ENCODE measurements at regions of chr5 and their contacts with region 1.

Region 1: DNA sequence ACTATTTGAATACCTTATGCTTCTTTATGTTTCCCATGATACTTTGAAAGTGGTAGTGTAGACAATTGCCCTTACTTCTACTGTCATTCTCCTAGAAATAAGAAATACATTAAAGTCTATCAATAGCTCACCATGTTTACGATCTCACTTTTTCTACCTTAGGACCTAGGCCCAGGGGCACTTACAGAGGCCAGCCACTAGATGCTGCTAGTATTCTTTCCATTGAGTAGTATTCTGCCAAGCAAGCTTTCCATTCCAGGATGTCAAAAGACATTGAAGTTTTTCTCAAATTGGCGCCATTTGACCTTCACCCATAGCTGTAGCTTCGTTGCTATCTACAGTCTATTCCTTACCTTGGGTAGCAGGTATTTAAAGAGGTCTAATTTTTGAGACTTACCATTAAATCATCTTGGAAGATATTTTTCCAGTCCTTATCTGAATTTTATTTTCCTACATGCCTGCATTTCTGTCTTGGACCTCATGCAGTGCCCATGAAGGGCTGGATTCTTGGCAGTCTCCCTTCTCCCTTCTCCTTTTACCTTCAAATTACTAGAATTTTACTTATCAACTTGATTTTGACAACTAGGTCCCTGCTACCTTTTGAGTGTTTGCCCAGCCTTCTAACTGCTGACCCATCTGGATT is 246.0 kb upstream of the NUDT12 start:
- DNase-seq: peak; percentile 40
- H3K4me3 ChIP-seq: no peak overlapping the region
- H3K27ac ChIP-seq: no peak overlapping the region
- H3K4me1 ChIP-seq: no peaks in the 10 kb centered on the region
- H3K27me3 ChIP-seq: no peaks in the 10 kb centered on the region
- CTCF ChIP-seq: peak; percentile 99 to 100

Region 2: GRCh38 chr5:103582364-103582763 is 226.2 kb before region 1 on chr5:
- CTCF ChIA-PET with region 1: interaction called, 7 read pairs
- dilution Hi-C with region 1: no loop called
- in situ Hi-C with region 1: no loop called
- intact Hi-C with region 1: loop called (anchors 5 kb)
- DNase-seq: peak; percentile 32
- H3K4me3 ChIP-seq: no peak overlapping the region
- H3K27ac ChIP-seq: no peak overlapping the region
- H3K4me1 ChIP-seq: no peaks in the 10 kb centered on the region
- H3K27me3 ChIP-seq: no peaks in the 10 kb centered on the region
- CTCF ChIP-seq: peak; percentile 52 to 57

Region 3: DNA sequence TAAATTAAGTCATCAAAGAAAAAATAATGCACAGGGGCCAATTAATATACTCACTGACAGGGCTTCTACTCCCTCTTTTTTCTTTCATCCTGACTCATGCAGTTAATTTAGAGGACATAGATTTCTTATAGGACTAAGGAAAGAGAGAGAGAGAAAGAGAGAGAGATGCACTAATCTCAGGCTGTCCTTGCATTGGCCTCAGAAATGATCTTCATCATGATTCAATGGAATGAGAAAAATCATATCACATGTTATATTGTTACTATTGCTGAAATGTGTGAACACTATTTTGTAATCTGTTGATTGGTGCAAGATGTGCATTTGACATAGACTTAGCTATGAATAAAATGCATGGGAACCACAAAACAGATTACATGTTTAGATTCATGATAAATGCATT is 362.3 kb after region 1 on chr5:
- CTCF ChIA-PET with region 1: no interaction called
- dilution Hi-C with region 1: no loop called
- in situ Hi-C with region 1: loop called (anchors 10 to 25 kb)
- intact Hi-C with region 1: no loop called
- DNase-seq: no peak
- H3K4me3 ChIP-seq: no peak overlapping the region
- H3K27ac ChIP-seq: no peak overlapping the region
- H3K4me1 ChIP-seq: no peaks in the 10 kb centered on the region
- H3K27me3 ChIP-seq: no peaks in the 10 kb centered on the region
- CTCF ChIP-seq: no peak

Region 4: GRCh38 chr5:104400941-104401340 is 592.4 kb after region 1 on chr5:
- CTCF ChIA-PET with region 1: interaction called, 10 read pairs
- dilution Hi-C with region 1: no loop called
- in situ Hi-C with region 1: no loop called
- intact Hi-C with region 1: no loop called
- DNase-seq: no peak
- H3K4me3 ChIP-seq: no peak overlapping the region
- H3K27ac ChIP-seq: no peak overlapping the region
- H3K4me1 ChIP-seq: no peaks in the 10 kb centered on the region
- H3K27me3 ChIP-seq: no peaks in the 10 kb centered on the region
- CTCF ChIP-seq: no peak

Region 5: DNA sequence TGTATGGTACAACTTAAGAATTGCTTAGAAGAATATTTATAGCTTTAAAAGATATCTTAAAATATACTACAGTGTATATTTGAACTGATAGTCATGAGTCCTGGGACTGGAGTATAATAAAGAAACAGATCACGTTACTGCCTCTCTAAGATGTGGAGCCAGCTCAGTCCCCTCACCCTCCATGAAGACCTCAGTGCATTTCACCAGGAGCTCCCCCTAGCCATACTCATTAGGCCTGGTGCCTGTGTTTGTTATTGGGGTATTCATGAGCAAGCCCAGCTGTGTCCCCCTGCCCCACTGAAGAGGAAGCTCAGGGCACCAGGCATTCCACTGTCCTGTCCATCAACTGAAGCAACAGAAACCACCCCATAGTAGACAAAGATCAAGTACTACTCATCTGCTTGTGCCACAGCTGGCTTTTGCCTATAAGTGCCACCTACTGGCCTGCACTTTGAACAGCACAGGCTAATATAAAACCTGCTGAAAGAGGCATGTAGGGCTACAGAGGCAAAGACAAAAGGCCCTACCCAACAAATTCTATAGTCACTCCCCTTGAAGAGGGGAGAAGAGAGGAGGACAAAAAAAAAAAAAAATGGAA is 604.2 kb after region 1 on chr5:
- CTCF ChIA-PET with region 1: interaction called, 4 read pairs
- dilution Hi-C with region 1: no loop called
- in situ Hi-C with region 1: no loop called
- intact Hi-C with region 1: loop called (anchors 1 kb)
- DNase-seq: peak; percentile 35
- H3K4me3 ChIP-seq: no peak overlapping the region
- H3K27ac ChIP-seq: no peak overlapping the region
- H3K4me1 ChIP-seq: no peaks in the 10 kb centered on the region
- H3K27me3 ChIP-seq: no peaks in the 10 kb centered on the region
- CTCF ChIP-seq: peak; percentile 37 to 67

Measured in mammary epithelial cell (primary cell).